Gastrocnemius medialis (tissue), 4 donors: ENCODE measurements at regions of chr16 and their contacts with region 1.

Region 1: DNA sequence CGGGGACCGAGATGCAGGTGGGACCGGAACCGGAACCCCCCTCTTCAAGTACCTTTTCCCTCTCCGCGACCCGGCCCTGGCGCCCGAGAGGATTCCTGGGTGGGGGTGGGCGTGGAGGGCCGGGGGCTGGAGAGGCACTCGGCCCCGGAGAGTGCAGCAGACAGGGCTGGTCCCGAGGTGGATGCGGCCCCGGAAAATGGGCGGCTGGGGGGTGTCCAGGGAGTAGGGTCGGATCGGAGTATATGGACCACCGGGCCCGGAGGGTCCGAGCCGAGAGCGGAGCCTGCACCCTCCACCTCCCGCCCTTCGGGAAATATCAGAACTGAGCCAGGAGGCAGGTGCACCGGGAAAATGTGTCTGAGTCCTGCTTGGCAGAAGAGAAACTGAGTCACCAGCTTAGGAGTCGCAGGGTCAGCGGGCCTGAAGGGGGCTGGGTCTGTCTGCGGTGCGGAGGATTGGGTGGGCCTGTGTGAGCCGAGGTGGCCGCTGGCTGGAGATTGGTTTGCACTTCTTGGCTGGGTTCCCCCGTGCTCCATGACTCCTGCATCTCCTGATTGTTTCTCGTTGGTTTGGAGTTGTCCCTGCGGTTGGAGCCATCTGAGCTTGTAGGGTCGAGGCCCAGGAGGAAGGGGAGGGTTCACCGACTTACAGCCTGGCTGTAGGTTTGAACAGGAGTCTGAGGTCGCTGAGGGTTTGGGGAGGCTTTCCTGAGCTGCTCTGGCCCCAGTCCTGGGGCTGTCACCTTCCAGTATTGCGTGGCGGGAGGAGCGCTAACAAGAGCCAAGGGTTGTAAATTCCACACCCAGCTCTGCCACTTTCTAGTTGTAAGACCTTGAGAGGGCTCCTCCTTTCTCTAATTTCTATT is 518 bp downstream of the SH2B1 start:
- DNase-seq: peak in 1 of 2 donors; percentile 56
- ATAC-seq: peak; percentile 9 to 20
- H3K4me3 ChIP-seq: peak overlapping the region; percentile 69 to 98 (median 88)
- H3K27ac ChIP-seq: peak overlapping the region; percentile 94 to 98 (median 96)
- H3K4me1 ChIP-seq: peaks cover 13 to 16% of the 10 kb centered on the region in 2 donors
- H3K27me3 ChIP-seq: no peaks in the 10 kb centered on the region
- CTCF ChIP-seq: no peak
- POLR2A ChIP-seq: no peak

Region 2: DNA sequence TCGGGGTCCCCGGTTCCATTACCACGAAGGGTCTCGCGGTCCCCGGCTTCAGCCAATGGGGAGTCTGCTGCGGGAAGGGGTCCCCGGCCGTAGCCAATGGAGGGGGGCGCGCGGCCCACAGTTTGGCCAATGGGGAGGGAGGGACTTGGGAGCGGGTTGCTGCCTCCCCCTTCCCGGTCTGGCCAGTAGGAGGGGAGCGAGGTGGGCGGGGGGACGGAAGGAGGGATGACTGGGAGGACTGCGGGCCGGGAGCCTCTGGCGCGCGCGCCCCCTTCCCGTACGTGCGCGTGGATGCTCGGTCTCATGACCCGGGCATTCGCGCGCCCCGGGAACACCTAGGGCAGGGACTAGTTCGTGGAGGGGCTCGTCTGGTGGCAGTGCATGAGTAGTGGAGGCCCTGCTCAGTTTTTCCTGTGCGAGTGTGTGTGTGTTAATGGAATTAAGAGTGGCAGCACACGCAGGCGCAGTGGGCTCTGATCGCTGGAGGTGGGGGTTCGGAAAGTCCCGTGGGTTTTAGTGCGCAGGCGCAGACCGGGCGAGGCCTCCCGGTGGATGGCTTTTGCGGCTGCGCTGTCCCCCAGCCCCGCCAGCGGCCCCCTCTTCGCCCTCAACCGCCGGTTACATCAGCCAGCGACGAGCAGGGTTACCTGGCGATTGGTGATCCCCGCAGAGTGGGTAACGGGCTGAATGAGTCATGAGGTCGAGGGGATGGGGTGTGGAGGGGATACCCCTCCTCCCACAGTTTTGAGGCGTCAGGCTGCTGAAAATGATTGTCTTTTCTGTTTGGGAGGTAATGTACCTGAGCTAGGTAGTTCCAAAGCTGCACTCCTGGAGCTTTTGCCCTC is 40.1 kb before region 1 on chr16:
- in situ Hi-C with region 1: no loop called
- intact Hi-C with region 1: loop called (anchors 1 kb)
- DNase-seq: peak; percentile 98
- ATAC-seq: peak; percentile 81 to 84
- H3K4me3 ChIP-seq: peak overlapping the region; percentile 89 to 99 (median 96)
- H3K27ac ChIP-seq: peak overlapping the region; percentile 99 to 100 (median 100)
- H3K4me1 ChIP-seq: peaks cover 20% of the 10 kb centered on the region in 2 donors
- H3K27me3 ChIP-seq: no peaks in the 10 kb centered on the region
- CTCF ChIP-seq: peak in 4 of 5 experiments; percentile 41 to 45 (median 44)
- POLR2A ChIP-seq: peak; percentile 79 to 84

Region 3: DNA sequence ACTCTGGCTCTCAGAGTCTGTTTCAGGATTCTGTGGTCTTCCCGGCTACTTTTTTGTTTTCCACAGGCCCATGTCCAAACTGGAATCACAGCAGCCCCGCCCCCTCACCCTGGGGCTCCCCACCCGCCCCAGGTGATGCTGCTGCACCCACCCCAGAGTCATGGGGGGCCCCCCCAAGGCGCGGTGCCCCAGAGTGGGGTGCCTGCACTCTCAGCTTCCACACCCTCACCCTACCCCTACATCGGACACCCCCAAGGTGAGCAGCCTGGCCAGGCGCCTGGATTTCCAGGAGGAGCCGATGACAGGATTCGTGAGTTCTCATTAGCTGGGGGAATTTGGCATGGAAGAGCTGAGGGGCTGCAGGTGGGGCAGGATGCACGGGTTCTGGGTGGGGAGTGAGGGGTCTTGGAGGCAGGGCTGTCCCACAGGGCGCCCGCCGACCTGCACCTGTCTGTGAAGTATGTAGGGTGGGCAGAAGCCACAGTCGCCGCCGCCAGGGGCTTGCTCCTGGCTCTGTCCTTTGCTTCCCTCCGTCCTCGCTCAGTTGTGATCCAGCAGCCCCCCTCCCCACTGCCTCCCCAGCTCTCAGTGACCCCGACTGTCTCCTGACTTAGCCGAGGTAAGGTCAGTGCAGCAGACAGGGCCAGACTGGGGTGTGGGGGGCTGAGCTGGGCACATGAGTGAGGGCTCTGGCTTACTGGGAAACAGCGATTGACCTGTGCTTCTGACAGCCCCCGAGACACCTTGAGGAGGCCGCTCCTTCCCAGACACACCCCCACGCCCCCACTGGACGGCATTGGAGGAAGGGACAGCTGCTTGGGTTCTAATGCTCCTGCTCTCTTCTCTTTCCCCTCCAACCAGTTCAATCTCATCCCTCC is 28.1 kb before region 1 on chr16:
- in situ Hi-C with region 1: no loop called
- intact Hi-C with region 1: no loop called
- DNase-seq: no peak
- ATAC-seq: no peak
- H3K4me3 ChIP-seq: no peak overlapping the region
- H3K27ac ChIP-seq: no peak overlapping the region
- H3K4me1 ChIP-seq: no peaks in the 10 kb centered on the region
- H3K27me3 ChIP-seq: no peaks in the 10 kb centered on the region
- CTCF ChIP-seq: no peak
- POLR2A ChIP-seq: no peak

Region 4: DNA sequence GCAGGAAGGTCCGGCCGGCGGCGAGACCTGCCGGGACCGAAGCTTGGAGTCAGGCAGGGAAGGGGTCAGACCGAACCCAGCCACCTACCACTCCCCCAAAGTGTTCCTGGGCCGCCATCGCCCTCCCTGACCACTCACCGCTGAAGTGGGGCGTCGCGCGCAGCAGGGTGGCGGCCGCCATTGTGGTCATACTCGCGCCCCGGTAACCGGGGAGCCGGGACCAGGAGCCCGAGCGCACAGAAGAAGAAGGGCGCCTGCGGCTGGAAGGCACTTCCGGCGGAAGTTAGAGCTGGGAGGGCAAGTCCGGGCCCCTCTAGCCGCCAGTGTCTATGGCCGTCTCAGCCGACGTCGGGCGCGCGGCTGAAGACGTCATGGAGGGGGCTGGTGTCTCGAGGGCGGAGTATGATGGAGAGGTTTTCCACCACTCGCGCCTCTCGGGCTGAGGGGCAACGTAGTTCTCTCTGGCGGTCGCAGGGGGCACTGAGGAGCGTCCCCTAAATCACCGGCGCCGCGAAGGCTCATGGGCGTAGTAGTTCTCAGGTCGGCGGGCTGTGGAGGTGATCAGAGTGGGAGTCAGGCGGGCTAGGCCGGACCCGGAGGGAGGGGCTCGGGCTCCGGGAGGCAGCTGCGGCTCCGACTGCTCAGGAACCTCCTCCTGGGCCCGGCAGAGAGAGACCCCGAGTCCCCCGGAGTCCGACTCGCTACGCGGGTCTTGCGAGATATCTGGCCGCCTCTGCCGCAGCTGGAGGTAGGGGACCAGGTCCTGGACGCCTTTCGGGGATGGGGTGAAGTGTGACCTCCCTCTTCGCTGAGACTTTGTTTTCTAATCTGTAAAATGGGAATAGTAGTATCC is 17.9 kb before region 1 on chr16 and contains the start of gene TUFM:
- in situ Hi-C with region 1: no loop called
- intact Hi-C with region 1: loop called (anchors 1 kb)
- DNase-seq: peak; percentile 98
- ATAC-seq: peak; percentile 93 to 96
- H3K4me3 ChIP-seq: peak within 1 kb of the TSS; percentile 93 to 100 (median 98)
- H3K27ac ChIP-seq: peak within 1 kb of the TSS; percentile 92 to 96 (median 94)
- H3K4me1 ChIP-seq: peaks cover 20 to 24% of the 10 kb centered on the region in 2 donors
- H3K27me3 ChIP-seq: no peaks in the 10 kb centered on the region
- CTCF ChIP-seq: peak; percentile 36 to 81 (median 70)
- POLR2A ChIP-seq: peak; percentile 72 to 80
- total RNA-seq, gene TUFM: 140 to 196 (median 167) TPM

Region 5: DNA sequence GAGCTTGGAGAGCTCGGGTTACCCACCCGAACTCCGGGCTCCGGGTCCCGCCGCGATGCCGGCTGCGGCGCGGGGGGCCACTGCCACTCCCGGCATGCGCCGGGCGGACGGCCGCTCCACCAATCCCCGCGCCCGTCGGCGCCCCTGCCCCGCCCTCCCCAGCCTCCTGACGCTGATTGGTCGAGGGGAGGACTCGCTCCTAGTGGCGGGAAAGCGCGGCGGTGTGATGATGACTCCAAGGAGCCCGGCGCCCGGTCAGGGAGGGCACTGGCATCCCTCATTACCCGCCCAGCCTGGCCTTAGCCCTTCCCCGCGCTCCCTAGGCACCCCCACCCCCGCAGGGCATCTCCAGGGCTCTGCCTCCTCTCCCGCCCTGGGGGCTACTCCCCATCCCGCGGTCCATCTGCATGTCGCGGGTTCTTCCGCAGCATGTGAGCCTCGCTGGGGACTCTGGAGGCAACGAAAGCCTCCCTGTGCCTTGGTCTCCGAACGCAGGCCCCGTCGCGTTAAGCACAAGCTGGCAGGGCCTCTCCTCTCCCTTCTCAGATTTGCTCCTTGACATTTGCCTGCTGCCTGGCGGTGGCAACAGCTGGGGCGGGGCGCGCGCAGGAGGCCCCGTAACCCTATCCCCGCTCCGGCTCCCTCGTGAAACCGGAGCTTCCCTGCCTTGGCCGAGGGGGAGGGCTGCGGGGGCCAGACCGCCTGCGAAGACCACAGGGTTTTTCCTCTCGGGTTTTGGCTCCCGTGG is 15.9 kb after region 1 on chr16:
- in situ Hi-C with region 1: no loop called
- intact Hi-C with region 1: loop called (anchors 2 kb)
- DNase-seq: peak; percentile 86 to 91
- ATAC-seq: peak; percentile 40 to 55
- H3K4me3 ChIP-seq: peak overlapping the region; percentile 68 to 95 (median 75)
- H3K27ac ChIP-seq: peak overlapping the region; percentile 83 to 92 (median 90)
- H3K4me1 ChIP-seq: peaks cover 37 to 68% of the 10 kb centered on the region in 2 donors
- H3K27me3 ChIP-seq: no peaks in the 10 kb centered on the region
- CTCF ChIP-seq: peak in 3 of 5 experiments; percentile 24 to 44 (median 28)
- POLR2A ChIP-seq: peak; percentile 52 to 75

Region 6: DNA sequence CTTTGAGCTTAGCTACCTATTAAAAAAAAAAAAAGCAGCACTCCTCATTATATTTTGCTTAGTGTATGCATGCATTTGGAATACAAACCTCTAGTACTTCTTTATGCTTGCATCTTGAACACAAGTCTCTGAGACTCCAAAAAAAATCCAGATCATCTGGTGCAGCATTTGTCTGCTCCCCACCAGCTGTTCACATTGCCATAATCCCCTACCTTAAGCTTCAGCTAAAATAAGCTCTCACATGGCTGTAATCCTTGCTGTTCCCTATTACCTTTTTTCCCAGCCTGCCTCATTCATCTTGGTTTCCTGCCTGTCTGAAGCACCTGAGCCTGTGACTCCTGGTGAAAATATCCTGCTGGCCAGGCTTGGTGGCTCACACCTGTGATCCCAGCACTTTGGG is 79.1 kb after region 1 on chr16:
- in situ Hi-C with region 1: loop called in 2 of 4 experiments (anchors 10 kb)
- intact Hi-C with region 1: no loop called
- DNase-seq: no peak
- ATAC-seq: no peak
- H3K4me3 ChIP-seq: no peak overlapping the region
- H3K27ac ChIP-seq: no peak overlapping the region
- H3K4me1 ChIP-seq: peaks cover 5 to 9% of the 10 kb centered on the region in 2 donors
- H3K27me3 ChIP-seq: no peaks in the 10 kb centered on the region
- CTCF ChIP-seq: no peak
- POLR2A ChIP-seq: no peak